Endothelial cell of umbilical vein (primary cell): ENCODE measurements at regions of chr12 and their contacts with region 1.

Region 1: GRCh38 chr12:81128930-81129554 is 51.2 kb downstream of the ACSS3 start:
- DNase-seq: peak; percentile 60
- H3K4me3 ChIP-seq: no peak overlapping the region
- H3K27ac ChIP-seq: no peak overlapping the region
- H3K4me1 ChIP-seq: no peaks in the 10 kb centered on the region
- H3K27me3 ChIP-seq: no peaks in the 10 kb centered on the region
- CTCF ChIP-seq: peak; percentile 78 to 81
- POLR2A ChIP-seq: no peak

Region 2: GRCh38 chr12:81143067-81143466 is 14.0 kb after region 1 on chr12:
- CTCF ChIA-PET with region 1: interaction called, 19 read pairs
- POLR2A ChIA-PET with region 1: no interaction called
- dilution Hi-C with region 1: no loop called
- intact Hi-C with region 1: no loop called
- DNase-seq: no peak
- H3K4me3 ChIP-seq: no peak overlapping the region
- H3K27ac ChIP-seq: no peak overlapping the region
- H3K4me1 ChIP-seq: no peaks in the 10 kb centered on the region
- H3K27me3 ChIP-seq: no peaks in the 10 kb centered on the region
- CTCF ChIP-seq: no peak
- POLR2A ChIP-seq: no peak